Endothelial cell of umbilical vein (primary cell): ENCODE measurements at regions of chr1 and their contacts with region 1.

Region 1: GRCh38 chr1:197526736-197527371 is 248.4 kb downstream of the DENND1B start:
- DNase-seq: peak; percentile 31
- H3K4me3 ChIP-seq: no peak overlapping the region
- H3K27ac ChIP-seq: no peak overlapping the region
- H3K4me1 ChIP-seq: no peaks in the 10 kb centered on the region
- H3K27me3 ChIP-seq: no peaks in the 10 kb centered on the region
- CTCF ChIP-seq: peak; percentile 16 to 18
- POLR2A ChIP-seq: no peak

Region 2: DNA sequence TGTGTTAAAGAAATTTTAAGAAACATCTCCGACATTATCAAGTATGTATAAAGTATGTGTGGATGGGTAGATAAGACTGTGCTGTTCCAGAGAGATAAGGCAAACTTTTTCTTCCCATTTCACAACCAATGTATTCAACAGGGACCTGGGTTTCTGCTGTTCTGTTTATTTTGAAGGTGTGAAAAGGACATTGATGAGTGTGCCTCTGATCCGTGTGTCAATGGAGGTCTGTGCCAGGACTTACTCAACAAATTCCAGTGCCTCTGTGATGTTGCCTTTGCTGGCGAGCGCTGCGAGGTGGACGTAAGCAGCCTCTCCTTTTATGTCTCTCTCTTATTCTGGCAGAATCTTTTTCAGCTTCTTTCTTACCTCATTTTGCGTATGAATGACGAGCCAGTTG is 84.9 kb before region 1 on chr1:
- CTCF ChIA-PET with region 1: no interaction called
- POLR2A ChIA-PET with region 1: no interaction called
- dilution Hi-C with region 1: no loop called
- intact Hi-C with region 1: no loop called
- DNase-seq: no peak
- H3K4me3 ChIP-seq: no peak overlapping the region
- H3K27ac ChIP-seq: no peak overlapping the region
- H3K4me1 ChIP-seq: no peaks in the 10 kb centered on the region
- H3K27me3 ChIP-seq: no peaks in the 10 kb centered on the region
- CTCF ChIP-seq: no peak
- POLR2A ChIP-seq: no peak

Region 3: GRCh38 chr1:197541411-197541810 is 14.6 kb after region 1 on chr1:
- CTCF ChIA-PET with region 1: interaction called, 28 read pairs
- POLR2A ChIA-PET with region 1: no interaction called
- dilution Hi-C with region 1: no loop called
- intact Hi-C with region 1: no loop called
- DNase-seq: no peak
- H3K4me3 ChIP-seq: no peak overlapping the region
- H3K27ac ChIP-seq: no peak overlapping the region
- H3K4me1 ChIP-seq: no peaks in the 10 kb centered on the region
- H3K27me3 ChIP-seq: no peaks in the 10 kb centered on the region
- CTCF ChIP-seq: no peak
- POLR2A ChIP-seq: no peak

Region 4: DNA sequence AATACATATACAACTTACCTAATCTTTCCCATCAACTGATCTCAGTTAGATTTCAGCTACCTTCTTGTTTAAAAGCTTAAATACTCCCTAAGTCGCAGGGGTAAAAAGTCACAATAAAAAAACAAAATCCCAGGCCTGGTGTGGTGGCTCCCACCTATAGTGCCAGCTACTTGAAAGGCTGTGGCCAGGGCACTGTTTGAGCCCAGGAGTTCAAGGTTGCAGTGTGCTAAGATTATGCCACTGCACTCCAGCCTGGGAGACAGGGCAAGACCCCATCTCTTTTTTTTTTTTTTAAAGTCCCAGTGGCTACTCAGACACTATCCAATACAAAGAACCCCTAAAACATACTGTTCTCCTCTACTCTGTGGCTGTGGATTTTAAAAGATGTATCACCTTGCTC is 20.1 kb after region 1 on chr1:
- CTCF ChIA-PET with region 1: interaction called, 17 read pairs
- POLR2A ChIA-PET with region 1: no interaction called
- dilution Hi-C with region 1: no loop called
- intact Hi-C with region 1: no loop called
- DNase-seq: no peak
- H3K4me3 ChIP-seq: no peak overlapping the region
- H3K27ac ChIP-seq: no peak overlapping the region
- H3K4me1 ChIP-seq: no peaks in the 10 kb centered on the region
- H3K27me3 ChIP-seq: no peaks in the 10 kb centered on the region
- CTCF ChIP-seq: no peak
- POLR2A ChIP-seq: no peak

Region 5: GRCh38 chr1:197924516-197925123 is 397.8 kb after region 1 on chr1:
- CTCF ChIA-PET with region 1: interaction called, 12 read pairs
- POLR2A ChIA-PET with region 1: no interaction called
- dilution Hi-C with region 1: no loop called
- intact Hi-C with region 1: no loop called
- DNase-seq: peak; percentile 58
- H3K4me3 ChIP-seq: no peak overlapping the region
- H3K27ac ChIP-seq: no peak overlapping the region
- H3K4me1 ChIP-seq: peaks cover 3% of the 10 kb centered on the region
- H3K27me3 ChIP-seq: peaks cover 27 to 33% of the 10 kb centered on the region in 2 experiments
- CTCF ChIP-seq: peak; percentile 60 to 63
- POLR2A ChIP-seq: no peak

Region 6: DNA sequence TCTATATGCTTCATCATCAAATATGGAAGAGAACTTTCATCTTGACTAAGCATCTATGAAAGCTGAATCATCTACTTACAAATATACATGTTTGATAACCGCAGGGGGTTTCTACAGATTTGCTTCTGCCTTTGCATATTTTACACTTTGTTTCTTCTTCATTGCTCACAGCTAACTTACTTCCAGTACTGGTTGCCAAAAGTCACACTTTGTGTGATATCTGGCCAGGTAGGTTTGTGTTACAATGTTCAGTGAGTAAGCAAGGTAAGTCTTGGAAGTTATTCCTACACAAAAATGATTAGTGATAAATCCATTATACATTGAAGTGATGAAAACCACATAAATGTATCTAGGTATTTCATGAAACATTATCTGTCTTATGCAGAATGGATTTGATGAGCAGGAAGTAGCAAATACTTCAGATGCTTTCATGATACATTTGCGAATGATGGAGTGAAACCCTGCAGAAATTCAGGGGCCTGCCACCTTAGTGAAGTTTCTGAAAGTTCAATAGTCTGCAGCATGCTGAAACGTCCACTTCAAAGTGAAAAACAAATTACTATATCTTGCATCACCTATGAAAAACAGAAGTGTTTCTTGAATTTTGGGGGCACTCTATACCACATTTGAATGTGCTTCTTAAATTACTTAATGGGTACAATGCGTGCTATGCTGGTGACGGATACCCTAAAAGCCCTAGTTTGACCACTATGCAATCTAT is 826.3 kb after region 1 on chr1:
- CTCF ChIA-PET with region 1: no interaction called
- POLR2A ChIA-PET with region 1: no interaction called
- dilution Hi-C with region 1: no loop called
- intact Hi-C with region 1: loop called (anchors 5 kb)
- DNase-seq: no peak
- H3K4me3 ChIP-seq: no peak overlapping the region
- H3K27ac ChIP-seq: no peak overlapping the region
- H3K4me1 ChIP-seq: no peaks in the 10 kb centered on the region
- H3K27me3 ChIP-seq: no peaks in the 10 kb centered on the region
- CTCF ChIP-seq: no peak
- POLR2A ChIP-seq: no peak